Psoas muscle (tissue), 8 donors: ENCODE measurements at regions of chr17 and their contacts with region 1.

Region 1: GRCh38 chr17:4786106-4786511 is at the start of gene VMO1:
- DNase-seq: peak in 1 of 2 donors; percentile 61
- ATAC-seq: no peak
- H3K4me3 ChIP-seq: peak within 1 kb of the TSS; percentile 52
- H3K27ac ChIP-seq: no peak within 1 kb of the TSS
- H3K4me1 ChIP-seq: peaks cover 26% of the 10 kb centered on the region
- H3K27me3 ChIP-seq: peaks cover 0 to 51% (median 12%) of the 10 kb centered on the region in 3 donors
- CTCF ChIP-seq: no peak
- total RNA-seq, gene VMO1: 0.42 to 0.84 (median 0.64) TPM

Region 2: DNA sequence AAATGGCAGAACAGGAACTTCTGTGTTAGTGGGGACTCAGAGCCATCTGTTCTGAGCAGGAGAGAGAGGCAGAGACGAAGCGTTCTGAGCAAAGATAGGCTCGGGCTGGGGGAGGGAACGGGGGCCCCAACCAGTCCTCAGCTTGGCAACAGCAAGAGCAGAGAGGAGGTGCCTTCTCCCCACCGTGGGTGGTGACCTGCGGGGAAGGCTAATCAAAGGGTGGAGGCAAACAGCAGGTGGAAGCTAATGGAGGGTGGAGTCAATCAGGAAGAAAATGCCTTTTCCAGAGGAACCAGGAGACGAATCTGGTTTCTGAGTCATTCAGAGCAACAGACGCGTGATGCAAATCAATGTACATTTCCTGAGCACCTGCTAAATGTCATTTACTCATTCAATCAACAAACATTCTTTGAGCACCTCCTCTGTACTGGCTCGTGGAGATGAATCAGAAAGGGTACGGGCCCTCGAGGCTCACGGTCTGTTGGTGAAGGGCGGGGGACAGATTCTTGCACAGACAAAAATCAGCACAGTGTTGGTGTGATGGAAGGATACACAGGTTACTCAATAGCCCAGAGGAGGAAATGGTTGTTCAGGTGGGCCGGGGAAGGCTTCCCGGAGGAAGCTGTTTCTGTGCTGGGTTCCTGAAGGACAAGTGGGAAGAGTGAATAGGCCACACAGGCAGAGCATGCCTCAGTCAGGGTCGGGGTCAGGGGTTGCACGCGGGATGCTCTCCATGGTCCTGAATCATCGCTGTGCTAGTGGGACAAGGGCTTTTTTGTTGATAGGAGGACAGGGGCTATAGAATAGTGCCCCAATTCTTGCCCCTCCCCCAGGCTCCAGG is 293.2 kb before region 1 on chr17:
- intact Hi-C with region 1: no loop called
- DNase-seq: no peak
- ATAC-seq: no peak
- H3K4me3 ChIP-seq: no peak overlapping the region
- H3K27ac ChIP-seq: no peak overlapping the region
- H3K4me1 ChIP-seq: no peaks in the 10 kb centered on the region
- H3K27me3 ChIP-seq: no peaks in the 10 kb centered on the region
- CTCF ChIP-seq: no peak

Region 3: DNA sequence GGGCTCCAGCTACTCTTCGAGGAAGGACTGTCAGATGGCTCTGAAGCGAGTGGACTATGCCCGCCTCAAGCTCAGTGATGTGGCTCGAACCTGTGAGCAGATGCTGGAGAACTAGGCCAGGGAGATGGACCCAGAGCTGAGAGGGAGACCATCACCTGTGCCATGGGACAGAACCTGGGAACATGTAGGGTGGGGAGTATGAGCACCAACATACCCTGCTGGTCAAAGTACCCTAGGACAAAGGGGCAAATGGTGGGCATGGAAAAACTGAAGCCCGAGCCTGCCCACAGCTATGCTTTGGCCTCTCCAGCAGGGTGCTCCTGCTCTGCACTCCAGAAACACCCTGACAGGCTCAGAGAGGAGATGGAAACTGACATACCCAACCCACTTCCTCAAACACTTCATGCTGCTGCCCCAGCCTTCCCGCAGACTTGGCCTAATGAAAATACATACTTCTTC is 53.0 kb before region 1 on chr17:
- intact Hi-C with region 1: loop called in 1 of 2 experiments (anchors 2 kb)
- DNase-seq: no peak
- ATAC-seq: no peak
- H3K4me3 ChIP-seq: no peak overlapping the region
- H3K27ac ChIP-seq: no peak overlapping the region
- H3K4me1 ChIP-seq: peaks cover 9% of the 10 kb centered on the region
- H3K27me3 ChIP-seq: peaks cover 0 to 5% (median under 1%) of the 10 kb centered on the region in 3 donors
- CTCF ChIP-seq: no peak

Region 4: DNA sequence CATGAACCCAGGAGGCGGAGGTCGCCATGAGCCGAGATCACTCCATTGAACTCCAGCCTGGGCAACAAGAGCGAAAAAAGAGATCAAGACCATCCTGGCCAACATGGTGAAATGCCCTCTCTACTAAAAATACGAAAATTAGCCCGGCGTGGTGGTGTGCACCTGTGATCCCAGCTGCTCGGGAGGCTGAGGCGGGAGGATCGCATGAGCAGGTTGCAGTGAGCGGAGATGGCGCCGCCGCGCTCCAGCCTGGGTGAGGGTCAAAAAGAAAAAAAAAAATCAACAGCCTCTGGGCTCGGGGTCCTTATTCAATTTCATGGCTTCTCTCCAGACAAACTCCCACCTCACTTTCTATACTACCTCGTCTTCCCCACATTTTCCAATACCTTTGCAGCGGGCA is 142.8 kb after region 1 on chr17:
- intact Hi-C with region 1: no loop called
- DNase-seq: no peak
- ATAC-seq: no peak
- H3K4me3 ChIP-seq: no peak overlapping the region
- H3K27ac ChIP-seq: no peak overlapping the region
- H3K4me1 ChIP-seq: no peaks in the 10 kb centered on the region
- H3K27me3 ChIP-seq: no peaks in the 10 kb centered on the region
- CTCF ChIP-seq: no peak